GM12878 (cell line): ENCODE measurements at regions of chr16 and their contacts with region 1.

Region 1: GRCh38 chr16:81366316-81366932 is 51.7 kb downstream of the GAN start:
- DNase-seq: peak; percentile 23
- ATAC-seq: peak; percentile 82
- H3K4me3 ChIP-seq: no peak overlapping the region
- H3K27ac ChIP-seq: no peak overlapping the region
- H3K4me1 ChIP-seq: peaks cover 4% of the 10 kb centered on the region; the same call in 1 of the 2 replicates
- H3K27me3 ChIP-seq: no peaks in the 10 kb centered on the region
- CTCF ChIP-seq: peak; percentile 55 to 76 (median 70); a peak in 5 of 6 replicates
- EP300 ChIP-seq: no peak
- POLR2A ChIP-seq: no peak
- RAD21 ChIP-seq: peak; percentile 85

Region 2: GRCh38 chr16:81376880-81377279 is 10.5 kb after region 1 on chr16:
- CTCF ChIA-PET with region 1: interaction called, 5 read pairs
- POLR2A ChIA-PET with region 1: no interaction called
- RAD21 ChIA-PET with region 1: no interaction called
- SMC1A ChIA-PET with region 1: interaction called, 12 read pairs
- in situ Hi-C with region 1: no loop called
- intact Hi-C with region 1: no loop called
- DNase-seq: no peak
- ATAC-seq: no peak
- H3K4me3 ChIP-seq: no peak overlapping the region
- H3K27ac ChIP-seq: no peak overlapping the region
- H3K4me1 ChIP-seq: no peaks in the 10 kb centered on the region
- H3K27me3 ChIP-seq: no peaks in the 10 kb centered on the region
- CTCF ChIP-seq: no peak
- EP300 ChIP-seq: no peak
- POLR2A ChIP-seq: no peak
- RAD21 ChIP-seq: no peak

Region 3: DNA sequence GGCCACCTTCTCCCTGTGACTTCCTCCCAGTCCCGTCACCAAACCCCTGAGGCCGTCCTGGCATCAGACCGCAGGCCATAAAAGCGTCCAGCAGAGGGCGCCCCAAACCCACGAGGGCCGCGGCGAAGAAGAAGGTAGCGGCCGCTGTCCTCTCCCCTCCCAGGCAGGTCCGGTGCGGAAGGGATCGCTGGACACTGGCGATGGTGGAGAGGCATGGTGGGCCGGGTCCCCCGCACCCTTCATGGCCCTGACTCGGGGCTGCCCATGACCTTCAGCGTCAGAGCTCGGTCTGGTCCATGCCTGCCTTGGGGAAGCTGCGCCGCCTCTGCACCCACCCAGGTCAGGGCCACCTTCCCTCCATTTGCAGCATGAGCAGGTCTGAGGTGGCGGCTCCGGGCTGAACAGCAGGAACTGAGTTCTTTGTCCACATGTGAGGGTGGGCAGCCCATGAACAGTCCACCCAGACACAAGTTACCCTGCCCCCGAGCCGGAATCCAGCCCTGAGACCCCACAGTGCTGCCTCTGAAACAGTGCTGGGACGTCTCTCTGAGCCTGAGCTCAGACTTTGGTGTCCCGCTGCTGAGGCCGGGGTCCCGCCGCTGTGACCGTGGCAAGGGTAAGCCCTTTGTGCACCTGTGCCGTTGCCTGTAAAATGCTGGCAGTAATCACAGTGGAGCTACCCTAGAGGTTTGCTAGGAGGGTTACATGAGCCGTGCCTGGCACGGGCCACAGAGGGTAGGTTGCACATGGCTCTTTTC is 37.4 kb after region 1 on chr16:
- CTCF ChIA-PET with region 1: interaction called, 6 read pairs
- POLR2A ChIA-PET with region 1: no interaction called
- RAD21 ChIA-PET with region 1: no interaction called
- SMC1A ChIA-PET with region 1: no interaction called
- in situ Hi-C with region 1: no loop called
- intact Hi-C with region 1: loop called (anchors 5 kb)
- DNase-seq: peak; percentile 28
- ATAC-seq: peak; percentile 100
- H3K4me3 ChIP-seq: no peak overlapping the region
- H3K27ac ChIP-seq: no peak overlapping the region
- H3K4me1 ChIP-seq: no peaks in the 10 kb centered on the region
- H3K27me3 ChIP-seq: no peaks in the 10 kb centered on the region; a peak in 1 of 4 replicates
- CTCF ChIP-seq: peak; percentile 87 to 96 (median 88)
- EP300 ChIP-seq: no peak
- POLR2A ChIP-seq: no peak
- RAD21 ChIP-seq: peak; percentile 99

Region 4: GRCh38 chr16:81696961-81697615 is 330.7 kb after region 1 on chr16:
- CTCF ChIA-PET with region 1: interaction called, 9 read pairs
- POLR2A ChIA-PET with region 1: no interaction called
- RAD21 ChIA-PET with region 1: interaction called, 5 read pairs
- SMC1A ChIA-PET with region 1: interaction called, 7 read pairs
- in situ Hi-C with region 1: no loop called
- intact Hi-C with region 1: loop called (anchors 1 kb)
- DNase-seq: no peak
- ATAC-seq: peak; percentile 87
- H3K4me3 ChIP-seq: no peak overlapping the region
- H3K27ac ChIP-seq: no peak overlapping the region
- H3K4me1 ChIP-seq: no peaks in the 10 kb centered on the region
- H3K27me3 ChIP-seq: no peaks in the 10 kb centered on the region
- CTCF ChIP-seq: peak; percentile 75 to 76 (median 75)
- EP300 ChIP-seq: no peak
- POLR2A ChIP-seq: no peak
- RAD21 ChIP-seq: peak; percentile 73

Region 5: GRCh38 chr16:81723098-81723723 is 356.8 kb after region 1 on chr16:
- CTCF ChIA-PET with region 1: interaction called, 33 read pairs
- POLR2A ChIA-PET with region 1: no interaction called
- RAD21 ChIA-PET with region 1: interaction called, 7 read pairs
- SMC1A ChIA-PET with region 1: interaction called, 17 read pairs
- in situ Hi-C with region 1: loop called (anchors 5 kb)
- intact Hi-C with region 1: loop called (anchors 1 kb)
- DNase-seq: peak; percentile 62
- ATAC-seq: peak; percentile 97
- H3K4me3 ChIP-seq: no peak overlapping the region
- H3K27ac ChIP-seq: no peak overlapping the region
- H3K4me1 ChIP-seq: peaks cover 7% of the 10 kb centered on the region
- H3K27me3 ChIP-seq: no peaks in the 10 kb centered on the region
- CTCF ChIP-seq: peak; percentile 60 to 78 (median 69); a peak in 5 of 6 replicates
- EP300 ChIP-seq: no peak
- POLR2A ChIP-seq: no peak
- RAD21 ChIP-seq: peak; percentile 92

Region 6: GRCh38 chr16:81730090-81731051 is 363.9 kb after region 1 on chr16:
- CTCF ChIA-PET with region 1: interaction called, 33 read pairs
- POLR2A ChIA-PET with region 1: no interaction called
- RAD21 ChIA-PET with region 1: interaction called, 7 read pairs
- SMC1A ChIA-PET with region 1: interaction called, 7 read pairs
- in situ Hi-C with region 1: loop called (anchors 5 kb)
- intact Hi-C with region 1: no loop called
- DNase-seq: no peak
- ATAC-seq: peak; percentile 93
- H3K4me3 ChIP-seq: peak overlapping the region; percentile 52
- H3K27ac ChIP-seq: peak overlapping the region; percentile 60
- H3K4me1 ChIP-seq: peaks cover 12% of the 10 kb centered on the region
- H3K27me3 ChIP-seq: no peaks in the 10 kb centered on the region
- CTCF ChIP-seq: peak; percentile 49 to 78 (median 74)
- EP300 ChIP-seq: no peak
- POLR2A ChIP-seq: no peak
- RAD21 ChIP-seq: no peak

Region 7: DNA sequence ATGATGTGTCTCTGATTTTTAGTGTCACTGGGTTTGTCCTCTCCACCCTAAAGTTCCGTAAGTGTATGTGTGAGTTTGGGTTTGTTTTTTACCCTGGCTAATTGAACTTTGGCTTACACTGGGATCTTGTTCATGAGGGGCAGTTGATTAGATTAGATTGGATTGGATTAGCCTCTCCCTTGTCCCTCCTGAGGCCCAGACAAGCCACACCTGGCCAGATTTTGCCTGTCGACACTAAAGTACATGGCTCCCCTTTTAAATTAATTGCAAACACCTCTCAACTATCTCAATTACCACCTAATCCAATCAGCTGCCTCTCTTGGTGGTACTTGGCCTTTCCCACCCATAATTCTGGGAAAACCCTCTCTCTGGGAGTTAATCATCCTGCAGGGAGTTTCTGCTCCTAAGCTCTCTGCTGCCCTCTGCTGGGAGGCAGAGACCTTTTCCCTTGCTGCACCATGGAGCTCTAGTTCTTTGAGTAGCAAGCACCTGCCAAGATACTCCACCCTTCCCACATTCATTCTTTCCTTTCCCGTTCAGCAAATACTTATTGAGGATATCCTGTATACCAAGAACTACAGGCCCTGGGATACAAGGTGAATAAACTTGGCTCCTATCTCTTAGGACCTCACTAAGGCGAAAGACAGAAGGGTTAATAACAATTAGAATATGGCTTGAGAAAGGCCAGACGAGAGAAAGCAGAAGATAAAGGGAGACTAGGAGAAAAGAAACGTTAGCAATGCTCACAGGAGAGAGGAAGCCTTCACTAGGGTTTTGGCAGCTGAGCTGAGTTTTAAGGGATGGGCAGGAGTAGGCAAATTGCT is 863.6 kb after region 1 on chr16:
- CTCF ChIA-PET with region 1: interaction called, 8 read pairs
- POLR2A ChIA-PET with region 1: no interaction called
- RAD21 ChIA-PET with region 1: no interaction called
- SMC1A ChIA-PET with region 1: interaction called, 3 read pairs
- in situ Hi-C with region 1: no loop called
- intact Hi-C with region 1: loop called (anchors 10 kb)
- DNase-seq: peak; percentile 3
- ATAC-seq: peak; percentile 75
- H3K4me3 ChIP-seq: no peak overlapping the region
- H3K27ac ChIP-seq: no peak overlapping the region
- H3K4me1 ChIP-seq: no peaks in the 10 kb centered on the region
- H3K27me3 ChIP-seq: peaks cover 0 to 3% of the 10 kb centered on the region in 2 experiments; a peak in 2 of 4 replicates
- CTCF ChIP-seq: peak; percentile 84 to 93 (median 85)
- EP300 ChIP-seq: no peak
- POLR2A ChIP-seq: no peak
- RAD21 ChIP-seq: peak; percentile 72